T-cell (primary cell): ENCODE measurements at regions of chr7 and their contacts with region 1.

Region 1: GRCh38 chr7:7686811-7687508 is 31.4 kb downstream of the RPA3 start:
- DNase-seq: no peak
- ATAC-seq: no peak
- H3K4me3 ChIP-seq: no peak overlapping the region
- H3K4me3 Mint-ChIP-seq: no peak overlapping the region
- H3K27ac ChIP-seq: no peak overlapping the region
- H3K27ac Mint-ChIP-seq: no peak overlapping the region
- H3K4me1 ChIP-seq: peaks cover 0 to 1% of the 10 kb centered on the region in 2 experiments
- H3K4me1 Mint-ChIP-seq: peaks cover 29 to 44% (median 36%) of the 10 kb centered on the region in 3 donors
- H3K27me3 ChIP-seq: no peaks in the 10 kb centered on the region
- H3K27me3 Mint-ChIP-seq: no peaks in the 10 kb centered on the region

Region 2: GRCh38 chr7:7385421-7385820 is 301.5 kb before region 1 on chr7:
- CTCF ChIA-PET with region 1: no interaction called
- POLR2A ChIA-PET with region 1: no interaction called
- DNase-seq: no peak
- ATAC-seq: no peak
- H3K4me3 ChIP-seq: no peak overlapping the region
- H3K4me3 Mint-ChIP-seq: no peak overlapping the region
- H3K27ac ChIP-seq: no peak overlapping the region
- H3K27ac Mint-ChIP-seq: no peak overlapping the region
- H3K4me1 ChIP-seq: no peaks in the 10 kb centered on the region
- H3K4me1 Mint-ChIP-seq: no peaks in the 10 kb centered on the region
- H3K27me3 ChIP-seq: no peaks in the 10 kb centered on the region
- H3K27me3 Mint-ChIP-seq: no peaks in the 10 kb centered on the region

Region 3: DNA sequence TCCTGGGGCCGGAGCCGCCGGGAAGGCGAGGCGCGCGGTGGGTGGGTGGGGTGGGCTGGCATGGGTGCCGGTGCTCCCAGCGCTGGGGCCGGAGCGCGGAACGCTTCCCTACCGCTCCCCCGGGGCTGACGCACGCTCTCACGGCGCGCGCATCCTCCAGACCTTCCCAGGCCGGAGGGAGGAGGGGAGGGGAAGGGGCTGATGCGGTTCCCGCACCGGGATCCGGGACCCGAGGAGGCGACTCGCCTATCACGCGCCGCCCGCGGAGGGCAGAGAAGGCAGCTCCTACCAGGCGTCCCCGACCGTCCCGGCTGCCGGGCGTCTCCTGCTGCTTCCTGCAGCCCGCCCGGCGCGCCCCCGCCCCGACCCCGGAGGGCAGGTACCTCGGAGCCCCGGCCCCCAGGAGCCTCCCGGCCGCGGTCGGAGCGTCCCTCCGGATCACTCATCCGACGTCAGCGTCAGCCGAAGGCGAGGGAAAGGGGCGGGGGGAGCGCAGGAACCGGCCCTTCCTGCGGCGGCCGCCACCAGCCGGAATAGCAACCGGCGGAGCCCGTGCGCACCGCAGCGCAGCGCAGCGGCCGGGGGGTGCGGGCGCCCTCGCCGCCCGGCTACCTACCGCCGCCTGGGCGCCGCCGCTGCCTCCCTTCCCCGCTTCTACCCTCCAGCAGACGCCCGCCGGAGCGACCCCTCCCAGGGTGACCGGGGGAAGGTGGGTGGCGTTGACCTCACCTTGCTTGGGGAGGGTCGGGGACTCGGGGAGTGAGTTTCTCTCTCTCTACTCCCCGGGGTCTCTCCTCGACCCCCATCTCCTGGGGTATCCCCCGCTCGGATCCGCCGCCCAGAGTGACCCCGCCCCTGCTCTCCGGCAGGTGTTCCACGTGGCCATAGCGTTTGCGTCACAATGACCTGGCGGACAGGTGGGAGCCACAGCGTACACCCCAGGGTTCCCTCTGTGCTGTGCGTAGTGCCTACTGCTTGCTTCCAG is 575.0 kb after region 1 on chr7 and contains the start of gene ICA1:
- CTCF ChIA-PET with region 1: interaction called in 1 of 2 experiments, 14 read pairs
- POLR2A ChIA-PET with region 1: no interaction called
- DNase-seq: peak in 7 of 35 experiments; percentile 1 to 16 (median 6)
- ATAC-seq: peak in 3 of 4 experiments; percentile 31 to 46 (median 41)
- H3K4me3 ChIP-seq: peak within 1 kb of the TSS; percentile 22 to 72
- H3K4me3 Mint-ChIP-seq: peak within 1 kb of the TSS; percentile 64 to 73 (median 71)
- H3K27ac ChIP-seq: no peak within 1 kb of the TSS
- H3K27ac Mint-ChIP-seq: no peak within 1 kb of the TSS
- H3K4me1 ChIP-seq: peaks cover 0 to 10% of the 10 kb centered on the region in 2 experiments
- H3K4me1 Mint-ChIP-seq: peaks cover 6 to 13% (median 11%) of the 10 kb centered on the region in 3 donors
- H3K27me3 ChIP-seq: peaks cover 0 to 14% of the 10 kb centered on the region in 2 experiments
- H3K27me3 Mint-ChIP-seq: peaks cover 61 to 66% of the 10 kb centered on the region in 2 donors
- total RNA-seq, gene ICA1: 0.82 to 2.4 (median 1.1) TPM